Transverse colon (tissue), 4 donors: ENCODE measurements at regions of chr9 and their contacts with region 1.

Region 1: GRCh38 chr9:130235897-130236668 is 29.5 kb upstream of the HMCN2 start:
- DNase-seq: peak; percentile 66
- H3K4me3 ChIP-seq: no peak overlapping the region
- H3K27ac ChIP-seq: peak overlapping the region; percentile 66 to 79 (median 70)
- H3K4me1 ChIP-seq: peaks cover 3 to 17% (median 13%) of the 10 kb centered on the region in 4 donors
- H3K27me3 ChIP-seq: no peaks in the 10 kb centered on the region
- CTCF ChIP-seq: peak; percentile 98 to 100 (median 100)
- EP300 ChIP-seq: no peak
- POLR2A ChIP-seq: no peak

Region 2: DNA sequence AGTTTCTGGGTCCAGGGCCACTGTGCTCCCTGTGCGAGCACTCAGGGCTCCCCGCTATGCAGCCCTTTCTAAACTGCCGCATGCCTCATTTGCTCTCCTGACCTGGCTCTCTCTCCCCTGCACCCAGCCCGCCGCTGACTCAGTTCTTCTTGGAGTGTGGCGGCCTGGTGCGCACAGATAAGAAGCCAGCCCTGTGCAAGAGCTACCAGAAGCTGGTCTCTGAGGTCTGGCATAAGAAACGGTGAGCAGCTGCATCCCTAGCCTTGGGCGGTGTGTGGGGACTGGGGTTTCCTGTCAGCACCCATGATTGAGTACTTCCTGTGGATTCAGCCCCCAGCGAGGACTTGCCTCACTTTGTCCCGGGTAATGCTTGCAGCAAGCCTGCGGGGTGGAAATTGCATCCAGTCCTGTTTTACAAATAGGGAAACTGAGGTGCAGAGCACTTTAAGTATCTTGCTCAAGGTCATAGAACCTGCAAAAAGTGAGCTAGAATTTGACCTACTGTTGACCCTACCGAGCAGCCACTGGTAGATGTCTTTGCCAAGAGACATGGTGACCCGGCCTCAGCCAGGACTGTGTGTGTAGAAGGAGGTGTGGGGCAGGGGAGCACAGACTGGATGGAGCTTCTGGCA is 372.9 kb before region 1 on chr9:
- in situ Hi-C with region 1: no loop called
- intact Hi-C with region 1: no loop called
- DNase-seq: peak; percentile 53
- H3K4me3 ChIP-seq: no peak overlapping the region
- H3K27ac ChIP-seq: no peak overlapping the region
- H3K4me1 ChIP-seq: no peaks in the 10 kb centered on the region
- H3K27me3 ChIP-seq: no peaks in the 10 kb centered on the region
- CTCF ChIP-seq: no peak
- EP300 ChIP-seq: no peak
- POLR2A ChIP-seq: no peak

Region 3: DNA sequence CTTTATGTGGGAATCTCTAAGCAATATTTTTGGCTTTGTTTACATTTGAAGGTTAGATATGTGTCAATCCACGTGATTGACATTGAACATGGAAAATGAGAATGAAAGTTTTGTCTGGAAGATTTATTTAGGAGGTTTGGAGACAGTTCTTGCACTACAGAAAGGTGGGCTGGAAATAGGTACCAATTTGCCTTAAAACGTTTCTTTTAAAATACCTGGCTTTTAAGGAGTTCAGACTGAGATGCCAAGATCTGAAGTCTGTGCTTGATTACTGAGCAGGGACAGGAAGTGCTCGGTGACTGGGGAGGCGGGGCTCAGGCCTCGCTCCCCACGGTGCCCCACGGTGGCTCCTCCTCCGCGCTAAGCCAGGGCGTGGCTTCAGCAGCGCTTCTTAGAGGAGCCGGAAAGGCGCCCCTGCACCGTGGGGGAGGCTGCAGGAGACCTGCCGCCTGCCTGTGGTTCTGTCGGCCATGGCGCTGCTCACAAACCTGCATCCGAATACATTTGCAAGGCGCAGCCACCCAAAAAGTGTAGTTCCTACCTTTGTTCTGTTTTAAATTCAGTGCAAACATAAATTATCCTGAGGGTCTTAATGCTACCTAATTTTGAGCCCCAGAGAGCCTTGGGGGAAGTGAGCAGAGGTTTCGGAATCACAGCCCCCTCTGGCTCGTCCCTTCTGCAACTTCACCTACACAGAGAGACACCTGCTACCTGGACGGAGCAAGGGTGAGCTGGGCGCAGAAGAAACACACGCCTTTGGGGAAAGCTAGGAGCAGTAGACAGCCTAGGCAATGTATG is 351.7 kb before region 1 on chr9:
- in situ Hi-C with region 1: loop called in 2 of 4 experiments (anchors 25 kb)
- intact Hi-C with region 1: loop called (anchors 10 kb)
- DNase-seq: peak; percentile 96
- H3K4me3 ChIP-seq: peak overlapping the region in 3 of 4 donors; percentile 23 to 53 (median 25)
- H3K27ac ChIP-seq: peak overlapping the region; percentile 85 to 90 (median 87)
- H3K4me1 ChIP-seq: peaks cover 23 to 54% (median 37%) of the 10 kb centered on the region in 4 donors
- H3K27me3 ChIP-seq: no peaks in the 10 kb centered on the region
- CTCF ChIP-seq: no peak
- EP300 ChIP-seq: no peak
- POLR2A ChIP-seq: peak; percentile 63

Region 4: GRCh38 chr9:130107234-130107861 is 128.7 kb before region 1 on chr9:
- in situ Hi-C with region 1: loop called in 3 of 4 experiments (anchors 5 to 25 kb)
- intact Hi-C with region 1: loop called (anchors 5 kb)
- DNase-seq: peak; percentile 85
- H3K4me3 ChIP-seq: no peak overlapping the region
- H3K27ac ChIP-seq: peak overlapping the region in 3 of 4 donors; percentile 52 to 78 (median 64)
- H3K4me1 ChIP-seq: peaks cover 0 to 1% (median 0%) of the 10 kb centered on the region in 4 donors
- H3K27me3 ChIP-seq: no peaks in the 10 kb centered on the region
- CTCF ChIP-seq: peak; percentile 76 to 83 (median 80)
- EP300 ChIP-seq: no peak
- POLR2A ChIP-seq: no peak

Region 5: DNA sequence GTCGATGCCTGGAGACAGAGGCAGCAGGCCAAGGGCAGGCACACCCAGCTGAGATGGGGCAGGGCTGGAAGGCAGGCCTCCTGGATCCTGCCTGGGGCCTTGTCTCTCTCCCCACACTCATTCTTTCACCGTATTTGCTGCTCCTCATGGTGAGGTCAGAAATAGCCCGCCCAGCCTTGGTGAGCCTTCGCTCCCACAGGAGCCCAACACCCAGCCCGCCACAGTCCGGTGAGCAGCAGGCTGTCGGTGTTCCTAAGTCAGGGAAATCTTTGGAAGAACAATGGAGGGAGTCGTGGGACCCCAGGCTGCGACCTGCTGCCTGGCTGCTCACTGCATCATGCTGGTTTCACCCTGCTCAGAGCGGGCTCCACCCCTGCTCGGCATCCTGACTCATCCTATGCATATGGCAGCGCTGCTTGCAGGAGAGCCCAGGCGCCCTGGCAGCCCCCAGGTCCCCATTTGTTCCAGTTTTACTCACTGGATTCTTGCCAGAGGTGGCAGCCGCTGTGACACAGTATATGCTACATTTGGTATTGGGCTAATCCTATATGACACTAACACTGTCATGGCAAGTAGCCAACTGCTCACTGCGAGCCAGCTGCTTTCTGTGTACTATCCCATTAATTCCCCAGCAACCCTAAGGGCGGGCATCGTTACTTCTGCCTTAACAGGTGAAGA is 117.1 kb before region 1 on chr9:
- in situ Hi-C with region 1: loop called in 3 of 4 experiments (anchors 5 to 25 kb)
- intact Hi-C with region 1: no loop called
- DNase-seq: no peak
- H3K4me3 ChIP-seq: no peak overlapping the region
- H3K27ac ChIP-seq: peak overlapping the region; percentile 59 to 84 (median 81)
- H3K4me1 ChIP-seq: peaks cover 0 to 21% (median 15%) of the 10 kb centered on the region in 4 donors
- H3K27me3 ChIP-seq: no peaks in the 10 kb centered on the region
- CTCF ChIP-seq: no peak
- EP300 ChIP-seq: no peak
- POLR2A ChIP-seq: no peak

Region 6: GRCh38 chr9:130193531-130194377 is 42.3 kb before region 1 on chr9:
- in situ Hi-C with region 1: no loop called
- intact Hi-C with region 1: loop called (anchors 1 kb)
- DNase-seq: no peak
- H3K4me3 ChIP-seq: no peak overlapping the region
- H3K27ac ChIP-seq: peak overlapping the region; percentile 59 to 87 (median 81)
- H3K4me1 ChIP-seq: peaks cover 15 to 51% (median 33%) of the 10 kb centered on the region in 4 donors
- H3K27me3 ChIP-seq: no peaks in the 10 kb centered on the region
- CTCF ChIP-seq: no peak
- EP300 ChIP-seq: no peak
- POLR2A ChIP-seq: no peak

Region 7: DNA sequence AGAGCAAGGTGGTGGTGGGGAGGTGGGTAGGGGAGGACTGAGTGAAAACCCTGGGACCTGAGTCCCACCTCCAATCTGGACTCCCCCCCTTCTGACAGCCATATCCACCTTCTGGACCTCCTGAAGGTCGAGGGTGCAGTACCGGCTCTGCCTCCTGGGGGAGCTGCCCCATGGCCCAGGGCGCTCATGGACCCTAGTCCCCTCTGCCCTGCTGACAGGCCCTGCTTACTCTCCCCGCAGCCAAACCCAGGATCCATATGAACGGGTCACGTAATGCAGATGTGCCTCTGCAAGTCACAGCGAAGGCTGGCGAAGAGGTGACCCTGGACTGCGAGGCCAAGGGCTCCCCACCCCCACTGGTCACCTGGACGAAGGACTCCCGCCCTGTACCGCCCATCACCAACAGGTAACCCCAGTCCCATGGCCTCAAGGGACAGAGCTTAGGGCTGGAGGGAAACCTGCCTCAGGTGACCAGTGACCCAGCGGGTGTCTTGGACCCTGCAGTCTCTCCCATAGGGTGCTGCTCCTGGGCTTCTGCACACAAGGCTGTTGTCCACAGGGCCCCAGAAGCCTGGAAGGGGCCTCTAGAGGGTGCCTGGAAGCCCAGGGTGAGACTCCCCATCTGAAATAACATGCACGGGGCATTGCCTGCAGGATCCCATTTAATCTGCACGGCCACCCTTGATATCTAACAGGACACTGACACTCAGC is 91.1 kb after region 1 on chr9:
- in situ Hi-C with region 1: no loop called
- intact Hi-C with region 1: no loop called
- DNase-seq: no peak
- H3K4me3 ChIP-seq: no peak overlapping the region
- H3K27ac ChIP-seq: peak overlapping the region; percentile 78 to 92 (median 85)
- H3K4me1 ChIP-seq: peaks cover 10 to 41% (median 22%) of the 10 kb centered on the region in 4 donors
- H3K27me3 ChIP-seq: peaks cover 20% of the 10 kb centered on the region
- CTCF ChIP-seq: peak; percentile 23 to 39 (median 32)
- EP300 ChIP-seq: no peak
- POLR2A ChIP-seq: no peak